Activated T-helper 1 cell treated with anti-CD3 and anti-CD28 coated beads, Interleukin-12 subunit alpha, Interleukin-12 subunit beta, Interleukin-2, Interleukin-4 antibody, amounts not matched to agents 30 ng/mL and 10 ng/mL and 1 ng/mL, durations not matched to agents 14 hours and 24 hours and 36 hours (primary cell): ENCODE measurements at regions of chr5 and their contacts with region 1.

Region 1: GRCh38 chr5:88140856-88141752 is 127.5 kb downstream of the TMEM161B start:
- DNase-seq: peak; percentile 89
- H3K4me3 Mint-ChIP-seq: no peak overlapping the region
- H3K27ac Mint-ChIP-seq: no peak overlapping the region
- H3K4me1 Mint-ChIP-seq: peaks cover 24% of the 10 kb centered on the region
- H3K27me3 Mint-ChIP-seq: peaks cover 32% of the 10 kb centered on the region

Region 2: GRCh38 chr5:87412630-87413342 is 728.3 kb before region 1 on chr5 and contains the start of gene CCNH:
- intact Hi-C with region 1: loop called (anchors 5 kb)
- DNase-seq: peak; percentile 95
- H3K4me3 Mint-ChIP-seq: peak within 1 kb of the TSS; percentile 99
- H3K27ac Mint-ChIP-seq: peak within 1 kb of the TSS; percentile 94
- H3K4me1 Mint-ChIP-seq: peaks cover 40% of the 10 kb centered on the region
- H3K27me3 Mint-ChIP-seq: no peaks in the 10 kb centered on the region
- total RNA-seq, gene CCNH: 77.6 and 80.9 TPM in 2 replicates

Region 3: DNA sequence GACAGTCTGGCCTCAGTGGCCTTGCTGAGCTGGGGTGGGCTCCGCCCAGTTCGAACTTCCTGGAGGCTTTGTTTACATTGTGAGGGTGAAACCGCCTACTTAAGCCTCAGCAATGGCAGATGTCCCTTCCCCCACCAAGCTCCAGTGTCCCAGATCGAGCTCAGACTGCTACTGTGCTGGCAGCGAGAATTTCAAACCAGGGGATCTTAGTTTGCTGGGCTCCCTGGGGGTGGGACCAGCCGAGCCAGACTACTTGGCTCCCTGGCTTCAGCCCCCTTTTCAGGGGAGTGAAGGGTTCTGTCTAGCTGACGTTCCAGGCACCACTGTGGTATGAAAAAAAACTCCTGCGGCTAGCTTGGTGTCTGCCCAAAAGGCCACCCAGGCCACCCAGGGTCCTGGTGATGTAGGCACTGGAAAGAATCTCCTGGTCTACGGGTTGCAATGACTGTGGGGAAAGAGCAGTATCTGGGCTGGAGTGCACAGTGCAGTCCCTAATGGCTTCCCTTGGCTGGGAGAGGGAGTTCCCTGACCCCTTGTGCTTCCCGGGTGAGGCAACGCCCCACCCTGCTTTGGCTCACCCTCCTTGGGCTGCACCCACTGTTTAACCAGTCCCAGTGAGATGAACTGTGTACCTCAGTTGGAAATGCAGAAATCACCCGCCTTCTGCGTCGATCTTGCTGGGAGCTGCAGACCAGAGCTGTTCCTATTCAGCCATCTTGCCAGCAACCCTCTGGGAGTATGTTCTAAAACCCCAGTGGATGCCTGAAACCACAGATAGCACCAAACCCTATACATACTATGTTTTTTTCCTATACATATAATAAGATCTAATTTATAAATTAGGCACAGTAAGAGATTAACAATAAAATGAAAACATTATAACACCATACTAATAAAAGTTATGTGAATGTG is 32.0 kb after region 1 on chr5:
- intact Hi-C with region 1: no loop called
- DNase-seq: no peak
- H3K4me3 Mint-ChIP-seq: no peak overlapping the region
- H3K27ac Mint-ChIP-seq: no peak overlapping the region
- H3K4me1 Mint-ChIP-seq: no peaks in the 10 kb centered on the region
- H3K27me3 Mint-ChIP-seq: peaks cover 13% of the 10 kb centered on the region

Region 4: DNA sequence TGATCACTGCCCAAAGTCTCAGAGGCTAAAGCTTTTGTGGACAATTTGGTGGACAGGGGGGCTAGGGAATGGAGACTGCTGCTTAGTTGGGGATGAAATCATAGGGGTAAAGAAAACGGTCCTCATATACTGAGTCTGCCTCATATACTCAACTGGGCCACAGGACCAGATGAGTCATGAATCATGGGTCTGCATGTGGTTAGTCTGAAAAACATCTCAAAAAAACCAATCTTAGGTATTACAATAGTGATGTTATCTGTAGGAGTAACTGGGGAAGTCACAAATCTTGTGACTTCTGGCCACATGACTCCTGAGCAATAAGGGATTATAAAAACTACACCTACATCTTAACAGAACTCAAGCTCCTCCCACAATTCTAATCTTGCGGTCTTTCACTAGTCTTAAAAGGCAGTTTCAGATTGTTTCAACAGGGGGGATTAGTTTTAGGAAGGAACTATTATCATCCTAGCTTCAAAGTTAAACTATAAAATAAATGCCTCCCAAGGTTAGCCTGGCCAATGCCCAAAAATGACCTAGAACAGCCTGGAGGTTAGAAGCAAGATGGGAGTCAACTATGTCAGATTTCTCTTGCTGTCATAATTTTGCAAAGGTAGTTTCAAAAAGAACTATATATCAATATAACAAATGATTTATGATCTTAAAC is 110.1 kb after region 1 on chr5:
- intact Hi-C with region 1: loop called (anchors 5 kb)
- DNase-seq: no peak
- H3K4me3 Mint-ChIP-seq: peak overlapping the region; percentile 57
- H3K27ac Mint-ChIP-seq: peak overlapping the region; percentile 72
- H3K4me1 Mint-ChIP-seq: peaks cover 54% of the 10 kb centered on the region
- H3K27me3 Mint-ChIP-seq: no peaks in the 10 kb centered on the region

Region 5: DNA sequence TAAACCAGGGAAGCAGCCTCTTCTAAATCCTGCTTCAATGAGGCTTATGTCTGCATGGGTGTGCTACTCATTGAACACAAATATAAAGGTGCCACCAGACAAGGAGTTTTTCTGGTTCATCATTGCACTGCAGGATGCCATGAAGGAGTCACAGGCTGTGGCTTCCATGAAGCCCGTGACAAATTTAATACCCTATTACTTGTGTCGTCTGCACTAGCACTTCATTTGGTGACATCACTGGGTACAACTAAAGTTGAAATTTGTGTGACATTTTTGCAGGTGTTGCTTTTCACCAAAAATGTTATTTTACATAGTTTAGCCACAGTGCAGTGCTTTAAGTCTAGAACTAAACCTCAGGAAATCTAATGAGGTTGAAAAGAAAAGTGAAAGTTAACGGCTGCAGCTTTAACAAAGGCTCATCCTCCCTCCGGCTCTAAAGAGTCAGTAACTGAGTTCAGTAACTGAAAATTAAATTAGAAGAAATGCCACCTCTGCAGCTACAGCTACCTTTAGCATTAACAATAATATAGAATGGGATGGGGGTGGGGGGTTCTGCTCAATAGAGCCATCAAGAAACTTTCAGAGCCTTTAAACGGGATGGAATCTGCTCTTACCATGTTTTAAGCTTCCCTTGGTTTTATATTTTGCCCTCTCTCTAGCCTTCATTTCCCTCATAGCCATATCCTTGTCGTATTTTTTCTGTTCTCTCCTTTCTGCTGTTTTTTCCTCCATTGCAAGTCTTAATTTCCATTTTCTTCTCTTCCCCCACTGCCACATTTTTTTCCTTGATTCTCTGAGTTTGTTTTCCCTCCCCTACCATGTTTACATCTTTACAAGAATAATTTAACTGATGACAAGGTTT is 361.3 kb after region 1 on chr5:
- intact Hi-C with region 1: loop called (anchors 2 kb)
- DNase-seq: no peak
- H3K4me3 Mint-ChIP-seq: peak overlapping the region; percentile 81
- H3K27ac Mint-ChIP-seq: peak overlapping the region; percentile 84
- H3K4me1 Mint-ChIP-seq: peaks cover 25% of the 10 kb centered on the region
- H3K27me3 Mint-ChIP-seq: peaks cover 15% of the 10 kb centered on the region

Region 6: DNA sequence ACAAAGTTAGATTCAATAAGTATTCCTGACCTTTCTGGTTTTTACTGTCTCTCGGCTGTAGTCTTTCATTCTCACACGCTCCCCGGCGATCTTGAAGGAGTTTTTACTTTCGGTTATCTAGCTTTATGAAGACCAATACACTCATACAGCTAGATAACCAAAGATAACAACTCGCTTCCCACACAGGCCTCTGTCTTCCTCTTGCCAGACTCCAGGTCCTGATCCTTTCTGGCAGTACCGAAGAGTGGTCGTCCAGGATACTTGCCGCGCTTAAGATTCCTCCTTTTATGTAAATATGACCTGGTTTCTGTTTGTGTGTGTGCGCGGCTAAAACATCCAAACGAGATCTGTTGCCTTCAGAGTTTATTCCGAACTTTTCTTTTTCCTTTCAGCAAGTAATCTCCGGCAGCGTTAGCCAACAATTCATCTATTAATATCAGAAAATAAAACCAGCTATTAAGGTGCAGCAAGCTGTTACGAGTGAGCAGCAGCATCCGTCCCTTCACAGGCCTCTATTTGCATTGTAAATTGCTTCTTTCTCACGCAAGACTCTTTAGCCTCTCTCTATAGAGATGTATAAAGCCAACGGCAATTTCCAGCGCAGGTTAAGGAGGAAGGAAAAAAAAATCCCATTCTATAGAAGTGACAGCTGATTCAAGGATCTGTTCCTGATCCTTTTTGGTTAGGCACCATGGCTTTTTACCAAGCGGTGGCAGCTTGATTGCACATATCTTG is 525.8 kb after region 1 on chr5:
- intact Hi-C with region 1: loop called (anchors 2 kb)
- DNase-seq: no peak
- H3K4me3 Mint-ChIP-seq: peak overlapping the region; percentile 81
- H3K27ac Mint-ChIP-seq: peak overlapping the region; percentile 29
- H3K4me1 Mint-ChIP-seq: peaks cover 31% of the 10 kb centered on the region
- H3K27me3 Mint-ChIP-seq: peaks cover 88% of the 10 kb centered on the region

Region 7: DNA sequence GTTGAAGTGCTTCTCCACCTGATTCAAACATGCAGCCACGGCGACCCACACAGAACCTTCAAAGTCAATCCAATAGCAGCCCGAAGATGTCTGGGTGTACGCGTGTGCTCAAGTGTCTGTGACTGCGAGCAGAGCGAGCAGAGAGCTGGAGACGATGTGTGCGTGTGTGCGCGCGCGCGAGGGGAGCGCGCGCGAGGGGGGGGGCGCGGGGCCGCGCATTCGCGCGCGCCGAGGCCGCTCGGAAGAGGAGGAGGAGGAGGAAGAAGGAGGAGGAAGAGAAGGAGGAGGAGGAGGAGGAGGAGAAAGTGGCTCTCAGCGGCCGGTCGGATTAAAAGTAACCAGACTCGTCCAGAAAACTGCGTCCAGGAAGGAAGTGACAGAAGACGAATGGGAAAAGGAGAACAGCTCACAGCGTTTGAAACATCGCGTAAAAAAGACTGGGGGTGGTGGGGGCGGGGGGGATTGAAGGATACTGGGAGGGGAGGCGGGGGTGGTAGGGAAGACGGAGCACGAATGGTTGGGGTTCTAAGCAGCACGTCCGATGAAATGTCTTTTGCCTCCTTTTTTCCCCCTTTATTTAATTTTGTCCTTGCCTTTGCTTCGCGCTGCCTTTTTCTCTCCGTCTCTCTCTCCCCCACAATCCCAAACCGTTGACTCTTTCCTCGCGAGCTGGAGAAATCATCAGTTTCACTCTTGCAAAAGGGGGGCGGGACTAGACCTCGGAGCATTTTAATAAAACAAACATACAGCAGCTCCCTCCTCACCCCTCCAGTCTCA is 742.1 kb after region 1 on chr5 and contains the start of gene MEF2C:
- intact Hi-C with region 1: loop called (anchors 5 kb)
- DNase-seq: no peak
- H3K4me3 Mint-ChIP-seq: peak within 1 kb of the TSS; percentile 87
- H3K27ac Mint-ChIP-seq: no peak within 1 kb of the TSS
- H3K4me1 Mint-ChIP-seq: peaks cover 21% of the 10 kb centered on the region
- H3K27me3 Mint-ChIP-seq: peaks cover 59% of the 10 kb centered on the region
- total RNA-seq, gene MEF2C: 0.44 and 0.47 TPM in 2 replicates

Region 8: GRCh38 chr5:89156226-89156625 is 1015.1 kb after region 1 on chr5:
- intact Hi-C with region 1: no loop called
- DNase-seq: no peak
- H3K4me3 Mint-ChIP-seq: no peak overlapping the region
- H3K27ac Mint-ChIP-seq: no peak overlapping the region
- H3K4me1 Mint-ChIP-seq: no peaks in the 10 kb centered on the region
- H3K27me3 Mint-ChIP-seq: no peaks in the 10 kb centered on the region